B cell (primary cell): ENCODE measurements at regions of chr10 and their contacts with region 1.

Region 1: DNA sequence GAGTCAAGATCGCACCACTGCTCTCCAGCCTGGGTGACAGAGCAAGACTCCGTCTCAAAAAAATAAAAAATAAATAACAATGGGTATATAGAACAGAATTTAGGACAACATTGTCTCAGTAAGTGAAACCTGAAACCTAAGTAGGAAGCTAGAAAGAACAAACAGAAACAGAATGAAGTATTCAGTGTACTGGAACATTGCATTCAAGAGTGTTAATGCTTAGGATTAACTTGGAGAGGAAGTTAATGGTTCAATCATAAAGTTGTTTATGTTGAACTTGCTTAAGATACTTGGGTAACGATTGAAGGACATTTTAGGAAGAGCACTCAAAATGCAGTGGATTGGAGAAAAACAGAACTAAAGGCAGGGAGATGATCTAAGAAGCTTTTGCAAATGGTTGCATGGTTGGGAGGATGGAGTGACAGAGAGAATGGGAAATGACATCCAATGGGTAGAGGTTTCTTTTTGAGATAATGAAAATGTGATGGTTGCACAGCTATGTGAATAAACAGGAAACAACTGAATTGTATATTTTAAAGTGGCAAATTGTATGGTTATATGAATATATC is 233.7 kb downstream of the ADK start:
- DNase-seq: peak; percentile 26
- ATAC-seq: peak; percentile 31
- H3K4me3 ChIP-seq: no peak overlapping the region
- H3K4me3 Mint-ChIP-seq: peak overlapping the region; percentile 38
- H3K27ac ChIP-seq: peak overlapping the region; percentile 4 to 74
- H3K27ac Mint-ChIP-seq: peak overlapping the region; percentile 74
- H3K4me1 ChIP-seq: peaks cover 21 to 40% of the 10 kb centered on the region in 2 donors
- H3K4me1 Mint-ChIP-seq: peaks cover 40% of the 10 kb centered on the region
- H3K27me3 ChIP-seq: no peaks in the 10 kb centered on the region
- H3K27me3 Mint-ChIP-seq: no peaks in the 10 kb centered on the region
- CTCF ChIP-seq: no peak

Region 2: GRCh38 chr10:74332398-74332797 is 52.3 kb before region 1 on chr10:
- CTCF ChIA-PET with region 1: no interaction called
- POLR2A ChIA-PET with region 1: no interaction called
- intact Hi-C with region 1: loop called (anchors 10 kb)
- DNase-seq: no peak
- ATAC-seq: no peak
- H3K4me3 ChIP-seq: no peak overlapping the region
- H3K4me3 Mint-ChIP-seq: no peak overlapping the region
- H3K27ac ChIP-seq: no peak overlapping the region
- H3K27ac Mint-ChIP-seq: no peak overlapping the region
- H3K4me1 ChIP-seq: no peaks in the 10 kb centered on the region
- H3K4me1 Mint-ChIP-seq: peaks cover 9% of the 10 kb centered on the region
- H3K27me3 ChIP-seq: no peaks in the 10 kb centered on the region
- H3K27me3 Mint-ChIP-seq: no peaks in the 10 kb centered on the region
- CTCF ChIP-seq: no peak

Region 3: DNA sequence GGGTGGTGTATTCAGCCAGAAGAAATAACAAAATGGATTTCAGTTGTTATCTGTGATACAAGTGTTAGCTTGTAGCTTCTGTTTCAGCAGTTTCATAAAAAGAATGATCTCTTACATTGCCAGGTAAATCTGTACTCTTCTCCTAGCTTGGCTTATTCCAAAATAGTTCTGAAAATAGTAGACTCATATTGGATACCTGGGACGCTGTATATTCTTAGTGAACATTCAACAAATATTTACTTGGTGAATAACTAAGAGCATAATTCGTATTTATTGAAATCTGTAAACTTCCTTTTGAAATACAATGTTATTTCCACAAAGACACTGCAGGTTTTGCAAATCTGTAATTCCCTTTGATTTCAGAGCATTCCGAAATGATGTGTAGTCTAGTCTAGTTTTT is 15.5 kb after region 1 on chr10:
- CTCF ChIA-PET with region 1: no interaction called
- POLR2A ChIA-PET with region 1: no interaction called
- intact Hi-C with region 1: no loop called
- DNase-seq: no peak
- ATAC-seq: no peak
- H3K4me3 ChIP-seq: no peak overlapping the region
- H3K4me3 Mint-ChIP-seq: no peak overlapping the region
- H3K27ac ChIP-seq: no peak overlapping the region
- H3K27ac Mint-ChIP-seq: no peak overlapping the region
- H3K4me1 ChIP-seq: no peaks in the 10 kb centered on the region
- H3K4me1 Mint-ChIP-seq: peaks cover 1% of the 10 kb centered on the region
- H3K27me3 ChIP-seq: no peaks in the 10 kb centered on the region
- H3K27me3 Mint-ChIP-seq: no peaks in the 10 kb centered on the region
- CTCF ChIP-seq: no peak